Heart right ventricle (tissue), 16 donors: ENCODE measurements at regions of chr3 and their contacts with region 1.

Region 1: DNA sequence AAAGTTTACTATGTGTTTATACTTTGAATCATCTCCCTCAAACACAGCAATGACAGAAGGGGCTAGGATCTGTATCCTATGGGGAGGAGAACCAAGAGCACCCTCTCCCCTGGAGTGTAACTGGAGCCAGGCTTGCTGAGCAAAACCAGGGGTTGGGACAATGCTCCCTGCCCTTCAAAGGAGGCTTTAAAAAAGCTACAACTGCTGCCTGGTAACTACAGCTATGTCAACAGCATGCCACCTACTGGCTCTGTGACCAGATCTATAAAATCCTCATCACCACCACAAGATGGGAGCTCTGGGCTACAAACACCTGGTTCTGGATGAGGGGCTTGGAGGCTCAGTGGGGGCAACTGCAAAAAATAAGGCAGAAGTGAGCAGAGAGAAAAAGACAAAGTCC is 61.8 kb downstream of the ANO10 start:
- DNase-seq: no peak
- ATAC-seq: peak in 2 of 8 donors; percentile 47 to 50
- H3K4me3 ChIP-seq: no peak overlapping the region
- H3K27ac ChIP-seq: no peak overlapping the region
- H3K4me1 ChIP-seq: no peaks in the 10 kb centered on the region
- H3K27me3 ChIP-seq: no peaks in the 10 kb centered on the region
- CTCF ChIP-seq: peak in 1 of 9 donors; percentile 14

Region 2: DNA sequence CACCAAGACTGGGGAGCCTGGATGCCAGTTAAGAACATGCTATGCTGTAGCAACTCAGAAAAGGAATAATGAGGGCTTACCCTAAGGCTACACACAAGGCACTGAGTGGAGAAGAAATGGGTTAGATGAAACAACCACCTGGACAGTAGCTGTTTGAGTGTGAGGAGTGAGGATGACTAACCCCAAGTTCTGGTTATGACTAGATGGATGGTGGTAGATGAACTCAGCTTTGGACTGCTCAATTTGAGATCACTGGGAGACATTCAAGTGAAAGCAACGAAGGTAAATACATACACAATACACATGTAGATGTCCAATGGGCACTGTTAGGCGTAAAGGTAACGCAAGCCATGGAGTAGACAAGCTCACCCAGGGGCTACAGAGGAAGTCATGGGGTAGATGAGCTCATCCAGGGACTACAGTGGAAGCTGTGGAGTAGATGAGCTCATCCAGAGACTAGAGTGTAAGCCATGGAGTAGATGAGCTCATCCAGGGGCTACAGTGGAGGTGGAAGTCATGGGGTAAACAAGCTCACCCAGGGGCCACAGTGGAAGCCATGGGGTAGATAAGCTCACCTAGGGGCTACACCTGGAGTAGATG is 36.4 kb before region 1 on chr3:
- intact Hi-C with region 1: no loop called
- DNase-seq: no peak
- ATAC-seq: no peak
- H3K4me3 ChIP-seq: no peak overlapping the region
- H3K27ac ChIP-seq: no peak overlapping the region
- H3K4me1 ChIP-seq: peaks cover 0 to 5% (median 0%) of the 10 kb centered on the region in 9 donors
- H3K27me3 ChIP-seq: no peaks in the 10 kb centered on the region
- CTCF ChIP-seq: no peak

Region 3: DNA sequence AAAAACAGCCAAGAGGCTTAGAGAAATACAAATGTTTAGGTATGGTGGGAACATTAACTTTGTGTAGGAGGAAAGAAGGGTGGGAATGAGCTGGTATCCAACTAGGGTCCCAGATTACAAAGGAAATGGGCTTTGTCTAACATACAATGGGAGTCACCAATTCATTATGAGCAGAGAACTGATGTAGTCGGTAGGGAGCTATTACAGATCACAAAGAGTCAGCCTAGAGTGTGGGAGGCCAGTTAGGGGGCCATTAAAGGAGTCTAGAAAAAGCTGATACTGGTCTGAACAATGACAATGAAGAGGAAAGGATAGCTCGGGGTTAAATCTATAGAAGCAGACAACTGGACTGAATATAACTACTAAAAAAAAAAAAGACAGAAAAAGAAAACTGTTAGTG is 46.3 kb after region 1 on chr3:
- intact Hi-C with region 1: no loop called
- DNase-seq: no peak
- ATAC-seq: no peak
- H3K4me3 ChIP-seq: no peak overlapping the region
- H3K27ac ChIP-seq: no peak overlapping the region
- H3K4me1 ChIP-seq: peaks cover 0 to 6% (median 0%) of the 10 kb centered on the region in 9 donors
- H3K27me3 ChIP-seq: no peaks in the 10 kb centered on the region
- CTCF ChIP-seq: no peak

Region 4: DNA sequence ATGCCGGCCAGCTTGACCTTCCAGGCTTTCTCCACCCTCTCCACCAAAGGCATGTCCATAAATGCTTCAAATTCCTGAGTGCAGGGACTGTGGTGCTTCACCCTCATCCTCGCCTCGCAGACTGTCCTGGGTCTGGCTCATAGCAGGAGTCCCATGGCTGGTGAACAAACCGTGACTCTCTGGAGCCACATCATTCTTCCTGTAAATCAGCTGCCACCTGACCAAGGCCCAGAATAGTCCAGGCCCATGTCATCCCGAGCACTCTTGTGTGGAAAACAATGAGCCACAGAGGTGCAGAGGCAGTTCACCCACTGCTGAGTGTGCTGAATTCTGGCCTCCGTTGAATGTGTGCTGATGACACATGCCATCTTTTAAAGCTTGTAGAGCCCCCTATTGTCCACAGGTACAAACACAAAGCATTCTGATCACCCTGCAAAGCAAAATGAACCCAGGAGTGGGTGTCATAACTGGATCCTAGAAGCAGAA is 199.4 kb after region 1 on chr3:
- intact Hi-C with region 1: loop called in 1 of 10 experiments (anchors 10 kb)
- DNase-seq: peak in 1 of 2 donors; percentile 22
- ATAC-seq: peak; percentile 56 to 95 (median 88)
- H3K4me3 ChIP-seq: no peak overlapping the region
- H3K27ac ChIP-seq: peak overlapping the region in 9 of 10 donors; percentile 28 to 79 (median 70)
- H3K4me1 ChIP-seq: peaks cover 8 to 21% (median 17%) of the 10 kb centered on the region in 9 donors
- H3K27me3 ChIP-seq: no peaks in the 10 kb centered on the region
- CTCF ChIP-seq: peak in 5 of 9 donors; percentile 12 to 37 (median 23)